Calu3 (cell line): ENCODE measurements at regions of chr7 and their contacts with region 1.

Region 1: DNA sequence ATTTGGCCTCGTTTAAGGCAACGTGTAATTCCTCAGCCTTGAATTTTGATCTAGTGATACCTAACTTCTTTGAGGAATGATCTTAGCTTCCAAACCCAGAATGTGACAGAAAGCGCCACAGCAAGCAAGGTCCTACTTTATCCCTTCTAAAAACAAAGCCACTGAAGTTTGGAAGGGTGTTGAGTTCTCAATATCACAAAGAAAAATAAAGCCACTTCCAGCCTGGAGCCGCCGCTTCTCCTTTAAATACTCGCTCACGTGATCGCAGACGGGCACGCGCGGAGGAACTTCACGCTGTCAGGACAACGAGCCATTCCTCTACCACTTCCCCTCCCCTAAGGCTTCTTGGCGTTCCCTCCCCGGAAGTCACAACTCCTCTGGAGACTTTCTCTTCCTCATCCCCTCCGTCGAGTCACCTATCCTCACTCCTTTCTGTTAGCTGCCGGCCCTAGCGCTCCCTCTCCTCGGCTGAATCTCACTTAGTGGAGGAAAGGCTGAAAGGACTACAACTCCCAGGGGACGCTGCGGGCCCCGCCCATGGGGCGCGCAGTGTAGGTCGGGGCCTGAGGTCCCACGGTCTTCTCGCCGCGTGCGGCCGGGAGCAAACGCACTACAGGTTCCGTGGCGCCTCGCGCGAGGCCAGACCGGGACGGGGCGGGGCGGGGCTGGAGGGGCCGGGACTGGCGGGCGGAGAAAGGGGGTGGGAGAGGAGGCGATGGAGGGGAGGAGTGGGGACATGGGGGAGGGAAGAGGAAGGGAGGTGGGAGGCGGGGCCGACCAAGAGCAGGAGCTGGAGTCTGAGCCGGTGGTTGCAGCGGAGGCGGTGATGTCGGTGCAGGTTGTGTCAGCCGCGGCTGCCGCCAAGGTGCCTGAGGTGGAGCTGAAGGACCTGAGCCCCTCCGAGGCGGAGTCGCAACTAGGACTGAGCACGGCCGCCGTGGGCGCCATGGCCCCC is at the start of gene AHCYL2:
- DNase-seq: peak; percentile 96
- H3K4me3 Mint-ChIP-seq: peak within 1 kb of the TSS; percentile 84
- H3K27ac Mint-ChIP-seq: peak within 1 kb of the TSS; percentile 95
- H3K4me1 Mint-ChIP-seq: peaks cover 10% of the 10 kb centered on the region
- H3K27me3 Mint-ChIP-seq: no peaks in the 10 kb centered on the region
- CTCF ChIP-seq: no peak
- total RNA-seq, gene AHCYL2: 54.6 and 66.4 TPM in 2 replicates

Region 2: DNA sequence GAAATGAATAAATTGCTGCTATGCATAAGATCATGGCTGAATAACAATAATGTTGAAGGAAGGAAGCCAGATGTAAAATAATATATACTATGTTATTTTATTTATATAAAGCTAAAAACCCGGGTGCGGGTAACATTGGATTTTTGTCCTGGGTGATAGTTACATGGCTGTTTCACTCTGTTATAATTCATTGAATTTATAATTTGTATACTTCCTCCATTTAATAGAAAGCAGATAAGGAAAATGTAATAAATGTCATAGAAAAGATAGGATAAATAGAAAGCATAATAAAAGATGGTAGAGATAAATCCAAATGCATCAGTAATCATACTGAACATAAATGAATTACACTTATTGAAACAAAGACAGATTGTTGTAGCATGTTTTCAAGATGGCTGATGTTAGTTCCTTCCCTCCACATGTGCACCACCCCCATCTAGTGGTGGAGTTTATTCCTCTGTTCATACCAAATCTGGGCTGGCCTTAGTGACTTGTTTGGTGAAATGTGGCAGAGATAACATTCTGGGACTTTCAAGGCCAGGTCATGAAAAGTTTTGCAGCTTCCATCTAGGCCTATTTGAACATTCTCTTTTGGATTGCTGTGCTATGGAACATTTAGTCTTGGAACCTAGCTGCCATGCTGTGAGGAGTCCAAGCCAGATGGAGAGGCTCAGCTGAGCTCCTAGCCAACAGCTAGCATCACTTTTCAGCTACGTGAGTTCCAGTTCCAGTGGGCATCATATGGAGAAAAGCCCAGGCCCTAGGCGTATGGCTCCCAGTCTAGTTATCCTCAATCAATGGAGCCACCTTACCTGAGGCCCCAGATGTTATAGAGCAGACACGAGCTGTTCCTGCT is 47.2 kb after region 1 on chr7:
- CTCF ChIA-PET with region 1: no interaction called
- intact Hi-C with region 1: loop called (anchors 2 kb)
- DNase-seq: peak; percentile 71
- H3K4me3 Mint-ChIP-seq: no peak overlapping the region
- H3K27ac Mint-ChIP-seq: no peak overlapping the region
- H3K4me1 Mint-ChIP-seq: no peaks in the 10 kb centered on the region
- H3K27me3 Mint-ChIP-seq: no peaks in the 10 kb centered on the region
- CTCF ChIP-seq: peak; percentile 43

Region 3: DNA sequence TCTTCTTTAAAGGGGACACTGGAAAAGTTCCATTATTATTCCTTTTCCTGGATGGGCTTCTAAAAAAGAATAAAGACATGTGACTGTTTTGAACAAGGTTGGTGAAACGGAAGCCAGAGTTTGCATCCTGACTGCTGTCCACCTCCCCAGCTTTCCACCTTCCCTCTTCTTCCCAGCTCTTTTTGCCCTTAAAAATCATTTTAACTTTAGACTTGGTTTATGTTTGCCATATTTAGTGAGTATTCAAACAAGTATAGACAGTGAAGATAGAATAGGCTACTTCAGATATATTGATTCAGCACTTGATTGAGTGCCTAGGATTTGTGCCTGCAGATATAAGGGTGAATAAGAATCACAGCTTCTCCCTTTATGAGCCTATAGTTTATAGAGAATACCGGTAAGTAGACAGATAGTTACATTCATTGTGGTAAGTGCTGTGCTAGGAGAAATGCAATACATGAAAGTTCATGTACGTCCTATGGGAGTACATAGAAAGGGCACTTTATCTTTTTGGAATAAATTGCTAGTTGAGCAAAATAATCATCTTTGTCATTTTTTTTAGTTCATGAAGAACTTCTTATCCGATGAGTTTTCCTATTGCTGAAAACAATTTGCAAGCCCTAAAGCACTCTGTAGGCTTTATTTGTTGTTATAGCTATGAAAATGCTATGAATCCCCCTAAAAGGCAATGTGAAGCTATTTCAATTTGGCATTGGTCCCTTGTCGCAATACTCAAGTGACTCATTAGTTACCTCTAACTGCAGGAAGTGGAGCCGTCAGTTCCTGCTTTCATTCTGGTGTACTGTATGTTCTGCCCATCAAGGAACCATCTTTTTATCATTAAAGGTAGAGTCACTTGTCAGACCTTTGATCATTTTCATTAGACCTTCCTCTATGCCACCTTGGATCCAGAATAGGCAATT is 152.5 kb after region 1 on chr7:
- CTCF ChIA-PET with region 1: no interaction called
- intact Hi-C with region 1: no loop called
- DNase-seq: peak; percentile 33
- H3K4me3 Mint-ChIP-seq: no peak overlapping the region
- H3K27ac Mint-ChIP-seq: no peak overlapping the region
- H3K4me1 Mint-ChIP-seq: peaks cover 31% of the 10 kb centered on the region
- H3K27me3 Mint-ChIP-seq: no peaks in the 10 kb centered on the region
- CTCF ChIP-seq: no peak

Region 4: DNA sequence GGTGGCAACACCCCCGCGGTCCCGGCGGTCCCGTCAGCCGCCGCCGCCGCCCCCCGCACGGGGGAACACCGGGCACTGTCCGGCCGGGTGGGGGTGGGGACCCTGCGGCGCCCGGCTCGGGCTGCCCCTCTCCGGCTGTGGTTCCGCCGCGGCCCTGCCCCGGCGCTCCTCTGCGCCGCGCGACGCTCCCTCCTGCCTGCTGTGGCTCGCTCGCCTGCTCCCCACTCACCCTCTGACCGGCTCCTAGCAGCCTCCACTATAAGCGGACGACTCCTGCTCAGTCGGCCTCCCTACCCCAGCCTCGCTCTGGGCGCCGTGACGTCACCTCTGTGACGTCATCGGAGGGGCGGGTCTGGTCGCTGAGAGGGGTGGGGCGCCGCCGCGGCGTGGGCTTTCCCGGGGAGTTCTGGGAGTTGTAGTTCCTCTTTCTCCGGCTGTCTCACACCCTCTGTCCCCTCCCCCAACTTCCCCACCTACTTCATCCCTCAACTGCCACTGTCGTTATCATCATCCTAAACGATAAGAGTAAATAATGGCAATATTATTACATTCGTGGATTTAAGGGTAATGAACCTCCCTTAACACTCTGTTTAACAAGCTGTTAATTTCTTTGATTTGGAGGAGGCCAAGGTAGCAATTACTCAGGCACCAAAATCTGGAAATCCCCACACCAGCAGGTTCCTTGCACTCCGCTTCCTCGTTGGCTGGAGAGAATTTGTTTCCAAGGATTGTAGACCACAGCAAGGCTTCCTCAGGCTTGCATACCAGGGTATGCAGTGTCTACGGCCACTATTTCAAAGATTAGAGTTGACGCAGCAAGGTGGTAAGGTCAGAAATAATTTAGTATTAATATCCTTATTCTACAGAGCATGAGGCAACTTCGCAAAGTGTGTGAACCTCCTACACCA is 728.4 kb after region 1 on chr7 and contains the start of gene UBE2H:
- CTCF ChIA-PET with region 1: no interaction called
- intact Hi-C with region 1: no loop called
- DNase-seq: peak; percentile 89
- H3K4me3 Mint-ChIP-seq: no peak within 1 kb of the TSS
- H3K27ac Mint-ChIP-seq: no peak within 1 kb of the TSS
- H3K4me1 Mint-ChIP-seq: peaks cover 19% of the 10 kb centered on the region
- H3K27me3 Mint-ChIP-seq: no peaks in the 10 kb centered on the region
- CTCF ChIP-seq: no peak
- total RNA-seq, gene UBE2H: 103 and 115 TPM in 2 replicates